ENCODE measurements at regions of chr7 and their contacts with region 1.

Region 1: GRCh38 chr7:48875045-48875916 is 49.1 kb upstream of the CDC14C start:
- DNase-seq: peak; percentile 39 to 95 (median 68)

Region 2: GRCh38 chr7:48299580-48300169 is 575.6 kb before region 1 on chr7:
- intact Hi-C with region 1: loop called (anchors 1 kb)
- DNase-seq: peak in 8 of 10 donors; percentile 47 to 93 (median 74)

Region 3: GRCh38 chr7:48337012-48337621 is 538.2 kb before region 1 on chr7:
- intact Hi-C with region 1: loop called (anchors 2 kb)
- DNase-seq: peak in 2 of 10 donors; percentile 15 to 28

Measured in posterior cingulate gyrus (tissue), 11 donors.